GM23248 (cell line): ENCODE measurements at regions of chr7 and their contacts with region 1.

Region 1: GRCh38 chr7:83410989-83411591 is 237.8 kb downstream of the SEMA3E start:
- DNase-seq: peak; percentile 76
- H3K4me3 ChIP-seq: no peak overlapping the region
- H3K27ac ChIP-seq: no peak overlapping the region
- H3K4me1 ChIP-seq: no peaks in the 10 kb centered on the region
- H3K27me3 ChIP-seq: no peaks in the 10 kb centered on the region

Region 2: GRCh38 chr7:83040484-83040883 is 370.6 kb before region 1 on chr7:
- in situ Hi-C with region 1: no loop called
- DNase-seq: no peak
- H3K4me3 ChIP-seq: no peak overlapping the region
- H3K27ac ChIP-seq: no peak overlapping the region
- H3K4me1 ChIP-seq: no peaks in the 10 kb centered on the region
- H3K27me3 ChIP-seq: 0 out of 2 replicates have a peak, but pooled peaks cover under 1% of the 10 kb centered on the region

Region 3: GRCh38 chr7:83655951-83656556 is 245.0 kb after region 1 on chr7:
- in situ Hi-C with region 1: loop called (anchors 10 kb)
- DNase-seq: peak; percentile 74
- H3K4me3 ChIP-seq: no peak overlapping the region
- H3K27ac ChIP-seq: no peak overlapping the region
- H3K4me1 ChIP-seq: no peaks in the 10 kb centered on the region
- H3K27me3 ChIP-seq: peaks cover 9% of the 10 kb centered on the region; the same call in 1 of the 2 replicates